ENCODE measurements at regions of chr1 and their contacts with region 1.

Region 1: GRCh38 chr1:12275369-12275768 is 45.5 kb downstream of the VPS13D start:
- DNase-seq: peak; percentile 12
- H3K4me3 ChIP-seq: no peak overlapping the region
- H3K27ac ChIP-seq: no peak overlapping the region
- H3K27me3 ChIP-seq: no peaks in the 10 kb centered on the region
- CTCF ChIP-seq: peak; percentile 91

Region 2: DNA sequence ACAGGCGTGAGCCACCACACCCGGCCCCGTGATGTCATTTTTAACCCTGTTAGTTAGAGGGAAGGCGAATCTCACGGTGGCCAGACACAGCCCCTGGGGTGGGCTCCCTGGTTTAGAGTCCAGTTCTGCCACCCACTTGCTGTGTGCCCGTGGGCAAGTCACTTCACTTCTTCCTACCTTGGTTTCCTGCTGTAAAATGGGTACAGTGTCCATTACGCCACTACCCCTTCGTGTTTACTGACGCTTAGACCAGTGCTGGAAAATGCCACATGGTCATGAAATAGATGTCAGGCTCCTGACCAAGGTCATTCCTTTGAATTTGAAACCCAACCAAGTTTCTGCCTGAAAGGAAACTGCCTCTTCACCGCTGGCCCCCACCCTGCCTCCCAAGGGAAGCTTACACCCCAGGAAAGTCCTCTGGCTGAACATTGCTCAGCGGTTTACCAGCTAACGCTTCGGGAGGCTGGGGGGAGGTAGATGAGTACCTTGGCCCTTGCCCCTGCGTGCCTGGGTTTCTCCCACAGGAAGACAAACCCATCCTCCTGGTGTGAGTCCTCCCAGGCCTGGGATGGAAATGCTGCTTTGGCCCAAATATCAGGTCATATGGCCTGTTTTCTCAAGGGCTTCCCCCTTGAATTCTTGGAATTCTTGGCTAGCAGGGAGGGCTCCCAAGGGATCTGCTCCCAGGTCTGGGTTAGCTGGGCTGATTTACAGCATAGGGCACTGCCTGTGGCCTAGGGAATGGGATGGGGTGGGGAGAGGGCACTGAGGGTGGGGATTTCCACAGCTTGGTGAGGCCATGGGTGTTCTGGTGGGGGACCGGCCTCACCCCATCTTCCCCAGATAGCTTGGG is 361.0 kb after region 1 on chr1:
- in situ Hi-C with region 1: loop called (anchors 25 kb)
- DNase-seq: peak; percentile 91
- H3K4me3 ChIP-seq: no peak overlapping the region
- H3K27ac ChIP-seq: peak overlapping the region; percentile 73
- H3K27me3 ChIP-seq: no peaks in the 10 kb centered on the region
- CTCF ChIP-seq: no peak

Measured in brain microvascular endothelial cell (primary cell).